Naive thymus-derived CD4-positive, alpha-beta T cell (primary cell): ENCODE measurements at regions of chr1 and their contacts with region 1.

Region 1: GRCh38 chr1:179298952-179299351 is 5.4 kb downstream of the SOAT1 start:
- DNase-seq: peak in 8 of 9 donors; percentile 42 to 80 (median 72)
- ATAC-seq: peak; percentile 89
- H3K4me3 ChIP-seq: no peak overlapping the region
- H3K4me3 Mint-ChIP-seq: peak overlapping the region; percentile 16 to 94 (median 58)
- H3K27ac ChIP-seq: peak overlapping the region; percentile 54
- H3K27ac Mint-ChIP-seq: peak overlapping the region; percentile 50 to 81 (median 64)
- H3K4me1 ChIP-seq: peaks cover 41 to 61% of the 10 kb centered on the region in 2 donors
- H3K4me1 Mint-ChIP-seq: peaks cover 57 to 90% (median 81%) of the 10 kb centered on the region in 7 donors
- H3K27me3 ChIP-seq: no peaks in the 10 kb centered on the region
- H3K27me3 Mint-ChIP-seq: no peaks in the 10 kb centered on the region

Region 2: GRCh38 chr1:179310721-179311120 is 11.8 kb after region 1 on chr1:
- CTCF ChIA-PET with region 1: no interaction called
- POLR2A ChIA-PET with region 1: interaction called, 6 read pairs
- intact Hi-C with region 1: loop called in 1 of 2 experiments (anchors 1 kb)
- DNase-seq: no peak
- ATAC-seq: peak; percentile 55
- H3K4me3 ChIP-seq: no peak overlapping the region
- H3K4me3 Mint-ChIP-seq: no peak overlapping the region
- H3K27ac ChIP-seq: no peak overlapping the region
- H3K27ac Mint-ChIP-seq: peak overlapping the region in 3 of 9 donors; percentile 15 to 48 (median 32)
- H3K4me1 ChIP-seq: peaks cover 0 to 3% of the 10 kb centered on the region in 2 donors
- H3K4me1 Mint-ChIP-seq: peaks cover 13 to 64% (median 52%) of the 10 kb centered on the region in 7 donors
- H3K27me3 ChIP-seq: no peaks in the 10 kb centered on the region
- H3K27me3 Mint-ChIP-seq: no peaks in the 10 kb centered on the region

Region 3: DNA sequence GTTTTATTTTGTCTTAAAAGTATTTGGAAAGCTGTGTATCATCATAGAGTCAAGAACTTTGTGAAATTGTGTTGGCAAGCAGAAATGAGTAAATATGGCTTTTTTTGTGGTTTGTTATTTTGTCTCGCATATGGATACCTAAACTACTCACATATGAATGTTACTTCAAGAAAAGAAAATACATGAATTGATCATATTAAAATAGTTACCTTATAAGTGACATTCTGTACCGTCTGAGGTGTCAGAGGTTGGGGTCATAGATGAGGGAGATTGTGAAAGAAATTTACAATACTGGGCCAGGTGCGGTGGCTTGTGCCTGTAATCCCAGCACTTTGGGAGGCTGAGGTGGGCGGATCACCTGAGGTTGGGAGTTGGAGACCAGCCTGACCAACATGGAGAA is 35.5 kb after region 1 on chr1:
- CTCF ChIA-PET with region 1: interaction called, 4 read pairs
- POLR2A ChIA-PET with region 1: no interaction called
- intact Hi-C with region 1: loop called (anchors 5 kb)
- DNase-seq: no peak
- ATAC-seq: no peak
- H3K4me3 ChIP-seq: no peak overlapping the region
- H3K4me3 Mint-ChIP-seq: no peak overlapping the region
- H3K27ac ChIP-seq: no peak overlapping the region
- H3K27ac Mint-ChIP-seq: peak overlapping the region in 2 of 9 donors; percentile 5 to 33
- H3K4me1 ChIP-seq: no peaks in the 10 kb centered on the region
- H3K4me1 Mint-ChIP-seq: peaks cover 11 to 29% (median 18%) of the 10 kb centered on the region in 7 donors
- H3K27me3 ChIP-seq: no peaks in the 10 kb centered on the region
- H3K27me3 Mint-ChIP-seq: no peaks in the 10 kb centered on the region

Region 4: GRCh38 chr1:179340918-179341317 is 42.0 kb after region 1 on chr1:
- CTCF ChIA-PET with region 1: no interaction called
- POLR2A ChIA-PET with region 1: no interaction called
- intact Hi-C with region 1: loop called in 1 of 2 experiments (anchors 5 kb)
- DNase-seq: no peak
- ATAC-seq: no peak
- H3K4me3 ChIP-seq: no peak overlapping the region
- H3K4me3 Mint-ChIP-seq: no peak overlapping the region
- H3K27ac ChIP-seq: no peak overlapping the region
- H3K27ac Mint-ChIP-seq: peak overlapping the region in 1 of 9 donors; percentile 77
- H3K4me1 ChIP-seq: no peaks in the 10 kb centered on the region
- H3K4me1 Mint-ChIP-seq: peaks cover 0 to 3% (median 0%) of the 10 kb centered on the region in 7 donors
- H3K27me3 ChIP-seq: no peaks in the 10 kb centered on the region
- H3K27me3 Mint-ChIP-seq: no peaks in the 10 kb centered on the region